Testis (tissue), 5 donors: ENCODE measurements at regions of chr5 and their contacts with region 1.

Region 1: GRCh38 chr5:135641734-135642361 is 63.1 kb upstream of the CXCL14 start:
- DNase-seq: no peak
- H3K4me3 ChIP-seq: no peak overlapping the region
- H3K27ac ChIP-seq: no peak overlapping the region
- H3K4me1 ChIP-seq: no peaks in the 10 kb centered on the region
- H3K27me3 ChIP-seq: no peaks in the 10 kb centered on the region
- CTCF ChIP-seq: no peak
- POLR2A ChIP-seq: no peak

Region 2: GRCh38 chr5:134637161-134637582 is 1004.7 kb before region 1 on chr5:
- intact Hi-C with region 1: no loop called
- DNase-seq: no peak
- H3K4me3 ChIP-seq: no peak overlapping the region
- H3K27ac ChIP-seq: no peak overlapping the region
- H3K4me1 ChIP-seq: no peaks in the 10 kb centered on the region
- H3K27me3 ChIP-seq: no peaks in the 10 kb centered on the region
- CTCF ChIP-seq: no peak
- POLR2A ChIP-seq: no peak

Region 3: DNA sequence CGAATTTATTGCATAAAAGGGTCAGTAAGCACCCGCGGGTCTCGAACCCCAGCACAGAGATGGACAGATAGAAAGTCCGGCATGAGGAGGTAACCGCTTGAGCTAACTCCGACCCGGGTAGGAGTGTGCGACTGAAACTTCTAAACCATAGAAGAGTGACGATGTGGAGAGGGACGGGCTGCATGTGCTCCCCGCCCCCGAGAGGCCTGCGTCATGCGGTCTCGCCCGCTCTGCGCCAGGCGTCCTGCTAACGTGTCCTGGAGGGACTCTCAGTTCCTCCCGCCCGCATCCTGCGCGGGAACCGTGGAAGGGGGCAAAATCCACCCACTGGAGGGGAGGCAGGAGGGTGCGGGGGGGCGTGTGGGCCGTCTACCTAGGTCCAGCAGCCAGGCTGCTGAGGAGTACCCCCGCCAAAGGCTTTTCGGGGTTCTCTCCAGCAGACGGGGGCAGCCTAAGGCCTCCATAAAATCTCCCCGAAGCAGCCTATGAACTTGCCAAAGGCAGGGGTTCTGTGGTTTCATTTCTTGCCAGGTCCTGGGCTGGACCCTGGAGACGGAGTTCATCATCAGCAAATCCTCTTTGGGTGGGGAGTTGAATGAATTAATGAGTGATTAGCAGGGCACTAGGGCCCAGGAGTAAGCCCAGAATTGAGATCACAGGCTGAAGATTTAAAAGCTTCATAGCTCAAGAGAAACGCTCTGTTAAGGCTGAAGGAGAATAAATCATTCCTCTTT is 438.8 kb after region 1 on chr5:
- intact Hi-C with region 1: loop called (anchors 10 kb)
- DNase-seq: peak; percentile 84
- H3K4me3 ChIP-seq: peak overlapping the region; percentile 32 to 38
- H3K27ac ChIP-seq: peak overlapping the region; percentile 39 to 78
- H3K4me1 ChIP-seq: no peaks in the 10 kb centered on the region
- H3K27me3 ChIP-seq: no peaks in the 10 kb centered on the region
- CTCF ChIP-seq: no peak
- POLR2A ChIP-seq: no peak